PC-9 (cell line): ENCODE measurements at regions of chr18 and their contacts with region 1.

Region 1: DNA sequence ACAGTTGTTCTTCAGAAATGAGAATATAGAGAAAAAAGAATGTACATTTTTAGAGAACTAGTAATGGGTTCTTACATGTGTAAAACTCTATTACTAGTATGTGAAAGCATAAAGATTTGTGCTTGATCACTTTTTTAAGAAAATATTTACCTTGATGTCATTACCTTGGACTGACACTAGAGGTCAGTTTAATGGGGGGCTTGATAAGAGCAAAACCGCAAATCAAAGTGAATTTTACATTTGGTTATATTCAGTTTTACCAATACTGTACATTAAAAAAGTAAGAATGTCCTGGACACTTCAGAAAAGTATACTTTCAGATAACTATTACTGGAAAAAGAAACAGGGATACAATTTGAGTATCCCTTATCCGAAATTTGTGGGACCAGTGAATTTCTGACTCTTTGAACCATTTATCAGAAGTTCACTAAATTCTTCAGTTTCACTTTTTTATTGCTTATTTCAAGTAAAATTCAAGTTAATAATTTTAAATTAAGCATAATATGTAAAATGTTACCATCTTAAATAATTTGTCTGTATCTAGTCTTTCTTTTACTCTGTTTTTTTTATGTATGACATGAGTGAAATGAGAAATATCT is 1149.5 kb downstream of the DSC3 start:
- DNase-seq: no peak
- H3K4me3 ChIP-seq: no peak overlapping the region
- H3K27ac ChIP-seq: no peak overlapping the region
- H3K4me1 ChIP-seq: no peaks in the 10 kb centered on the region
- H3K27me3 ChIP-seq: no peaks in the 10 kb centered on the region
- CTCF ChIP-seq: peak; percentile 63

Region 2: GRCh38 chr18:30280880-30281470 is 387.9 kb after region 1 on chr18:
- CTCF ChIA-PET with region 1: no interaction called
- POLR2A ChIA-PET with region 1: no interaction called
- intact Hi-C with region 1: loop called (anchors 5 kb)
- DNase-seq: peak in 1 of 2 experiments; percentile 2
- H3K4me3 ChIP-seq: no peak overlapping the region
- H3K27ac ChIP-seq: no peak overlapping the region
- H3K4me1 ChIP-seq: no peaks in the 10 kb centered on the region
- H3K27me3 ChIP-seq: no peaks in the 10 kb centered on the region
- CTCF ChIP-seq: peak; percentile 74